ENCODE measurements at regions of chr1 and their contacts with region 1.

Region 1: DNA sequence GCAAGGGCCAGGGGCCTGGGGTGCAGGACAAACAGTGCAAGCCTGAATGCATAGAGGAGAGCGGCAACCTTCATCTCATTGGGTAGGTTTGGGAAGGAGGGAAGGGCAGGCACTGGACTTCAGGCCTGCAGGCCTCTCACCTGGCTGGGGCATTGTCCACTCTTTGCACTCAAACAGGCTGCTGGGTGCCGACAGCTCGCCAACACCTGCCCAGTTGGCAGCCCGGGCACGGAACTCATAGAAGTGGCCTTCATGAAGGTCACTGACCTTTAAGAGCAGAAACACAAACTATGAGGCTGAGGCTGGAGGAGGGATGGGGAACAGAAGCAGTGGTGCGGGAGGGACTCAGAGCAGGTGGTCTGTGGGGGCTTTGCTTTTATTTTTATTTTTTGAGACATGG is 30.7 kb downstream of the MYOM3 start:
- DNase-seq: no peak
- CTCF ChIP-seq: no peak

Region 2: GRCh38 chr1:24058671-24059455 is 22.3 kb before region 1 on chr1:
- CTCF ChIA-PET with region 1: interaction called, 13 read pairs
- POLR2A ChIA-PET with region 1: no interaction called
- DNase-seq: no peak
- CTCF ChIP-seq: no peak

Region 3: GRCh38 chr1:24070821-24071393 is 10.3 kb before region 1 on chr1:
- CTCF ChIA-PET with region 1: interaction called, 14 read pairs
- POLR2A ChIA-PET with region 1: no interaction called
- DNase-seq: peak; percentile 88
- CTCF ChIP-seq: peak; percentile 75

Measured in GM10248 (cell line).